GM12878 (cell line): ENCODE measurements at regions of chr4 and their contacts with region 1.

Region 1: GRCh38 chr4:93501946-93502345 is 326.6 kb upstream of the ATOH1 start:
- DNase-seq: no peak
- ATAC-seq: no peak
- H3K4me3 ChIP-seq: no peak overlapping the region
- H3K27ac ChIP-seq: no peak overlapping the region
- H3K4me1 ChIP-seq: no peaks in the 10 kb centered on the region
- H3K27me3 ChIP-seq: no peaks in the 10 kb centered on the region
- CTCF ChIP-seq: no peak
- EP300 ChIP-seq: no peak
- POLR2A ChIP-seq: no peak
- RAD21 ChIP-seq: no peak

Region 2: GRCh38 chr4:92339676-92340075 is 1162.3 kb before region 1 on chr4:
- CTCF ChIA-PET with region 1: no interaction called
- POLR2A ChIA-PET with region 1: no interaction called
- RAD21 ChIA-PET with region 1: no interaction called
- SMC1A ChIA-PET with region 1: no interaction called
- in situ Hi-C with region 1: no loop called
- intact Hi-C with region 1: no loop called
- DNase-seq: no peak
- ATAC-seq: no peak
- H3K4me3 ChIP-seq: no peak overlapping the region
- H3K27ac ChIP-seq: no peak overlapping the region
- H3K4me1 ChIP-seq: no peaks in the 10 kb centered on the region
- H3K27me3 ChIP-seq: no peaks in the 10 kb centered on the region
- CTCF ChIP-seq: no peak
- EP300 ChIP-seq: no peak
- POLR2A ChIP-seq: no peak
- RAD21 ChIP-seq: no peak

Region 3: GRCh38 chr4:93433840-93434239 is 68.1 kb before region 1 on chr4:
- CTCF ChIA-PET with region 1: no interaction called
- POLR2A ChIA-PET with region 1: no interaction called
- RAD21 ChIA-PET with region 1: no interaction called
- SMC1A ChIA-PET with region 1: no interaction called
- in situ Hi-C with region 1: no loop called
- intact Hi-C with region 1: loop called (anchors 2 kb)
- DNase-seq: no peak
- ATAC-seq: no peak
- H3K4me3 ChIP-seq: no peak overlapping the region
- H3K27ac ChIP-seq: no peak overlapping the region
- H3K4me1 ChIP-seq: no peaks in the 10 kb centered on the region
- H3K27me3 ChIP-seq: no peaks in the 10 kb centered on the region
- CTCF ChIP-seq: no peak
- EP300 ChIP-seq: no peak
- POLR2A ChIP-seq: no peak
- RAD21 ChIP-seq: no peak